HEK293 (cell line): ENCODE measurements at regions of chr19 and their contacts with region 1.

Region 1: DNA sequence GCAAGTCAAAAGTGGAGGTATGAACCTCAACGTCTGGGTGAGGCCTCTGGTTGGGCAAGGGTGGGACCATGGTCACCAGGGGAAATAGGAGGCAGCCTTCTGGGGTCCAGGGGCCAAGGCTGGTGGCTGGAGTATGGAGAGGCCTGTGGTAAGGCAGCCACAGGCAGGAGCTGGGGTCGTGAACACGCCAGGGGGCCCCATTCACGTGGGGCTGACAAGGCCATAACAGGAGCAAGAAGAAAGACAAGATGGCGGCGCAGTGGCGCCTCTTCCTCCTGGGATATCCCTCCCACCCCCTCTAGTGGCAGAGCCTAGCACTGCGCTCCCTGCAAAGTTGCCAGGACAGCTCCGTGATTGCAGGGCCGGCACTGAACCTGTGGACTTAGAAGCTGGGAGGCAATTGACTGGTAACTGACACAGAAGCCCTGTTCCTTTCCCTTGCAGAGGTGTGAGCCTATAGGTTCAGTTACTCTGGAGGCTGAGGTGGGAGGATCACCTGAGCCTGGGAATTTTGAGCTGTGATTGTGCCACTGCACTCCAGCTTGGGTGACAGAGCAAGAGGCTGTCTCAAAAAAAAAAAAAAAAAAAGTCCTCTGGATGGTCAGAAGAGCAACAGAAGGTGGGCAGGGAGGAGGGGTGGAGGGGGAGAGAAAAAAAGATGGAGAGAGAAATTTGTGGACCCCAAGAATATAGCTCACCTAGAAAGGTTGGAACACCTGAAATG is 19.7 kb upstream of the EDDM13 start:
- H3K4me3 ChIP-seq: no peak overlapping the region
- H3K27ac ChIP-seq: no peak overlapping the region
- H3K4me1 ChIP-seq: no peaks in the 10 kb centered on the region
- CTCF ChIP-seq: no peak

Region 2: GRCh38 chr19:56080669-56081401 is 172.0 kb before region 1 on chr19:
- CTCF ChIA-PET with region 1: interaction called, 26 read pairs
- POLR2A ChIA-PET with region 1: interaction called, 3 read pairs
- H3K4me3 ChIP-seq: peak overlapping the region; percentile 28
- H3K27ac ChIP-seq: no peak overlapping the region
- H3K4me1 ChIP-seq: peaks cover 3% of the 10 kb centered on the region; the same call in 1 of the 2 replicates
- CTCF ChIP-seq: peak; percentile 18; the same call in 1 of the 2 replicates

Region 3: DNA sequence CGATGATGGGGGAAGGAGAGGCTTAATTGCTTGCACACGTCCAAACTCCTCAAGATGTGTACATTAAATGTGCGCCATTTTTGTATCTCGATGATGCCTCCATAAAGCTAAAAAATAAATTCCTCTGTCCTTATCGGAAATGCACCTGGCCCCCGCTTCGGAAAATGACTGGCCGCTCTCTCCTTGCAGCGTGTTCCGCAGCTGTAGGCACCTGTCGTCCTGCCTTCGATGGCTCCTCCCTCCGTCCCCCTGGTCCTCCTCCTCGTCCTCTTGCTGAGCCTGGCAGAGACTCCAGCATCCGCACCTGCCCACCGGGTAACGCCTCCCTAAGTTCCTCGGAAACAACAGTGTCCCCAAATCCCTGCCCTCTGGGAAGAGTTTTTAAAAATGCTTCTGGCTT is 76.0 kb before region 1 on chr19:
- CTCF ChIA-PET with region 1: interaction called, 16 read pairs
- POLR2A ChIA-PET with region 1: no interaction called
- H3K4me3 ChIP-seq: no peak overlapping the region
- H3K27ac ChIP-seq: no peak overlapping the region
- H3K4me1 ChIP-seq: no peaks in the 10 kb centered on the region
- CTCF ChIP-seq: no peak

Region 4: GRCh38 chr19:56270676-56271075 is 17.8 kb after region 1 on chr19:
- CTCF ChIA-PET with region 1: interaction called, 37 read pairs
- POLR2A ChIA-PET with region 1: interaction called, 5 read pairs
- H3K4me3 ChIP-seq: no peak overlapping the region
- H3K27ac ChIP-seq: no peak overlapping the region
- H3K4me1 ChIP-seq: no peaks in the 10 kb centered on the region
- CTCF ChIP-seq: no peak

Region 5: DNA sequence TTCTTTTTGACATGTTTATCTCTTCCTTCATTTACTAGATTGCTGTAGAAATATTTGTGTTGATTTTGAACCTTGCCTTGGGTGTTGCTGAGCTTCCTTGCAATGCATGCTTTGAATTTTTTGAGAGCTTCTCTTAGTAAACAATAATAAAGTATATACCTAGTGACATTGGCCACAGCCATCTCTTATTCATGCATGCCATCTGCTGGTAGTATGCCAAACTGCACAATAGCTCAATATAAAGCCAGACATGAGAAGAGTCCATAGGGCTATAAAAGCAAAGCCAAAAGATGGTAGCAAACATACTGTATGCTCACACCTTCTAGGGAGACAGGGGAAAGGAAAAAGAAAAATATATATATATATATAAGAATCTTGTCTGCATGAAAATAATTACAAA is 80.6 kb after region 1 on chr19:
- CTCF ChIA-PET with region 1: interaction called, 118 read pairs
- POLR2A ChIA-PET with region 1: interaction called, 4 read pairs
- H3K4me3 ChIP-seq: no peak overlapping the region
- H3K27ac ChIP-seq: no peak overlapping the region
- H3K4me1 ChIP-seq: no peaks in the 10 kb centered on the region
- CTCF ChIP-seq: no peak